ENCODE measurements at regions of chr11 and their contacts with region 1.

Region 1: DNA sequence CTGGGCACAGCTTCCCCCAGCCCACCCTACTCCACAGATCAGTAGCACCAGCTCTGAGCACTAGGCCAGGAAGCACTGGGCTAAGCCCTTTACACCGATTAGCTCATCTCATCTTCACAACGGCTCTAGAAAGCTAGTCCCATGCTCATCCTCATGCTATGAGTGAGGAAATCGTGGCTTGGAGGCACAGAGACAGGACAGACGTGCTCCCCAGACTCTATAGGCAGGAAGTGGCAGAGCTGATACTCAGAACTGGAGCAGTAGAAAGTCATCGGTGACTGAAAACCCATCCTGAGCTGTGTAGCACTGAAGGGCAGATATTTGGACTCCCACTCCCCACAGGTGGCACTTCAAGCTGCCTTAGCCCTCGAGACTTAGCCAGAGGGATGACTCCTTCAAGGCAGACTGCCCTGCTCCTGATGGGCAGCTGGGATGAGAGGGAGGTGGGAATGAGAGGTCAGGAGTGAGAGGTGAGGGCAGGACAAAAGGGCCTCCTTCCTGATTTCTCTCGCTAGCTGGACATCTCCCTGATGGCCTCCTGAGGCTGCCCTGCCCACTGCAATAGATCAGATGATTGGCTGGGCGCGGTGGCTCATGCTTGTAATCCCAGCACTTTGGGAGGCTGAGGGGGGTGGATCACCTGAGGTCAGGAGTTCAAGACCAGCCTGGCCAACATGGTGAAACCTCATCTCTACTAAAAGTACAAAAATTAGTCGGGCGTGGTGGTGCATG is 9.7 kb downstream of the CD5 start:
- DNase-seq: peak; percentile 91
- H3K4me3 Mint-ChIP-seq: peak overlapping the region; percentile 71
- H3K27ac Mint-ChIP-seq: no peak overlapping the region
- H3K4me1 Mint-ChIP-seq: peaks cover 99% of the 10 kb centered on the region
- H3K27me3 Mint-ChIP-seq: no peaks in the 10 kb centered on the region

Region 2: GRCh38 chr11:60242740-60243239 is 869.2 kb before region 1 on chr11 and contains the start of gene MS4A4E:
- CTCF ChIA-PET with region 1: no interaction called
- intact Hi-C with region 1: no loop called
- DNase-seq: no peak
- H3K4me3 Mint-ChIP-seq: no peak within 1 kb of the TSS
- H3K27ac Mint-ChIP-seq: no peak within 1 kb of the TSS
- H3K4me1 Mint-ChIP-seq: no peaks in the 10 kb centered on the region
- H3K27me3 Mint-ChIP-seq: peaks cover 16% of the 10 kb centered on the region
- total RNA-seq, gene MS4A4E: not detected

Region 3: GRCh38 chr11:60872961-60873524 is 238.9 kb before region 1 on chr11:
- CTCF ChIA-PET with region 1: no interaction called
- intact Hi-C with region 1: no loop called
- DNase-seq: no peak
- H3K4me3 Mint-ChIP-seq: no peak overlapping the region
- H3K27ac Mint-ChIP-seq: no peak overlapping the region
- H3K4me1 Mint-ChIP-seq: peaks cover 3% of the 10 kb centered on the region
- H3K27me3 Mint-ChIP-seq: no peaks in the 10 kb centered on the region

Region 4: DNA sequence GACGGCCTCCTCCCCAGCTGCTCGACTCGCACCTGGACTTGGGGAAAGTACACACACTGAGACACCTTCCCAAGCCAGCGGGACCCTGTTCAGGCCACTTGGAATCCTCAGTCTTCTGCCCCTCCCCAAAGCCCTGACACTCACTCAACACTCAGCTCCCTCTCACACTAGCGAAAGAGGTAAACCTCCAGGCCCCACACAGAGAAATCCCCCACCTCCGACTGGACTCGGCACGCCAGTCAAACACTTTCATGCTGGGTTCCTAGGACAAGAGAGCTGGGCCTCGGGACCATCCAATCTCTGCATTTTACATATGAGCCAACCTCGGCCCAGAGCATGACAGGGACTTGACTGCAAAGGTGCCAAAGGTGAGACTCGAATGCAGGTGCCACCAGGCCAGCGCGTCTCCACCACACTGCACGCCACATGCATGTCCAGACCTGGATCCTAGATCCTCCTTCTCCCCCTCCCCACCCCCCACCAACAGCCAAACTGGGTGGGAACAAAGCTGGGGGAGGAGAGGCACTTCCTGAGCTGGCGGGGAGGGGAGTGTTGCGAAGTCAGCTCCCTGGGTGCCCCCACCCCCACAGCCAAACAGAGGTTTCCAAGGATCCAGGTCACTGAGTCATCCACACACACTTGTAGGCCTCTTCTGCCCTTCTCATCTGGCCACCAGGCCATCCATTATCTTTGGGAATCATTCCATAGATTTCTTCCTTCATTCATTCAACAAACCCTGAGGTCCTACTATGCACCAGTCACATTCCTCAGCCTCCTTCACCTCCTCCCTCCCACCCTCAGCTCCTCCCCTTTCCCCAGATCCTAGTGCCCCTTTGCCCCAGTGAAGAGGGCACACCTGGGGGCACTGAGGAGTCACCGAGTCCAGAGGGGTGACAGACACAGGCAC is 20.3 kb before region 1 on chr11:
- CTCF ChIA-PET with region 1: interaction called, 12 read pairs
- intact Hi-C with region 1: no loop called
- DNase-seq: peak; percentile 84
- H3K4me3 Mint-ChIP-seq: peak overlapping the region; percentile 92
- H3K27ac Mint-ChIP-seq: peak overlapping the region; percentile 99
- H3K4me1 Mint-ChIP-seq: peaks cover 61% of the 10 kb centered on the region
- H3K27me3 Mint-ChIP-seq: no peaks in the 10 kb centered on the region

Region 5: GRCh38 chr11:61357233-61357893 is 245.4 kb after region 1 on chr11:
- CTCF ChIA-PET with region 1: no interaction called
- intact Hi-C with region 1: no loop called
- DNase-seq: no peak
- H3K4me3 Mint-ChIP-seq: no peak overlapping the region
- H3K27ac Mint-ChIP-seq: no peak overlapping the region
- H3K4me1 Mint-ChIP-seq: peaks cover 32% of the 10 kb centered on the region
- H3K27me3 Mint-ChIP-seq: no peaks in the 10 kb centered on the region